Posterior vena cava (tissue), 2 donors: ENCODE measurements at regions of chr16 and their contacts with region 1.

Region 1: DNA sequence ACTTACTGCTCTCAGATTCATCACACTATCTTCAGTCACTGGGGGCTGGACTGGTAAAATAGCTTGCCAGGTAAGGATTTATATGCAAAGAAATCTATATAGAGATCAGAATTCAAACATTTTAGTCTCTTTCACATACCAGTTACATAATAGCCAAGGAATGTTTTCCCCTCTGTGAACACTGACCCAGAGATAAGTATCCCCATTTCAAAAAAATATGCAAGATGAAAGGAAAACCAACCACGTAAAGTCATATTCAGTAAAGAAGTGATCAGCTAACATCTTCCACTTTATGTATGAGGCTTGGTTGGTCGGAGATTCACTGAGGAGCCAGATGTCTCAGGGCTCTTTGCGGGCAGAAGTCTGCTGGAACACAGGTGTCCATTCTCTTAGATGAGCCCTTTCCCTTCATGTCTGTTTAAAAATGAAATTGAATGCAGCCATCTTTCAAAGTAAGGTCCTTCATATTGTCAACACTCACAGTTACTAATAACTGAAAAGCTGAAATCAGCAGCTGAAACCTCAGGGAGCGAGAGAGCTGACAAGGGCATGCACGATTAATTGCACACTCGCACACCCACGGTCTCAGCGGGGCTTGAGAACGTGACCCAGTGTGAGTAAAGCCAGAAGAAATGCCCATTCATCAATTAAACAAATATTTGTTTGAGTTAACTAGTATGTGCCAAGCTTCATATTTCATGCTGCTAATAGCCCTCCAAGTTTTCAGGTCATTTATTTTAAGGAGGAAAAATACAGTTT is 161.2 kb downstream of the MRTFB start:
- DNase-seq: no peak

Region 2: GRCh38 chr16:14205666-14206065 is 26.6 kb before region 1 on chr16:
- intact Hi-C with region 1: no loop called
- DNase-seq: no peak

Region 3: GRCh38 chr16:14263011-14263410 is 30.7 kb after region 1 on chr16:
- intact Hi-C with region 1: loop called in 1 of 2 experiments (anchors 2 kb)
- DNase-seq: no peak

Region 4: GRCh38 chr16:15970202-15970601 is 1737.9 kb after region 1 on chr16:
- intact Hi-C with region 1: loop called in 1 of 2 experiments (anchors 10 kb)
- DNase-seq: no peak